ENCODE measurements at regions of chr3 and their contacts with region 1.

Region 1: DNA sequence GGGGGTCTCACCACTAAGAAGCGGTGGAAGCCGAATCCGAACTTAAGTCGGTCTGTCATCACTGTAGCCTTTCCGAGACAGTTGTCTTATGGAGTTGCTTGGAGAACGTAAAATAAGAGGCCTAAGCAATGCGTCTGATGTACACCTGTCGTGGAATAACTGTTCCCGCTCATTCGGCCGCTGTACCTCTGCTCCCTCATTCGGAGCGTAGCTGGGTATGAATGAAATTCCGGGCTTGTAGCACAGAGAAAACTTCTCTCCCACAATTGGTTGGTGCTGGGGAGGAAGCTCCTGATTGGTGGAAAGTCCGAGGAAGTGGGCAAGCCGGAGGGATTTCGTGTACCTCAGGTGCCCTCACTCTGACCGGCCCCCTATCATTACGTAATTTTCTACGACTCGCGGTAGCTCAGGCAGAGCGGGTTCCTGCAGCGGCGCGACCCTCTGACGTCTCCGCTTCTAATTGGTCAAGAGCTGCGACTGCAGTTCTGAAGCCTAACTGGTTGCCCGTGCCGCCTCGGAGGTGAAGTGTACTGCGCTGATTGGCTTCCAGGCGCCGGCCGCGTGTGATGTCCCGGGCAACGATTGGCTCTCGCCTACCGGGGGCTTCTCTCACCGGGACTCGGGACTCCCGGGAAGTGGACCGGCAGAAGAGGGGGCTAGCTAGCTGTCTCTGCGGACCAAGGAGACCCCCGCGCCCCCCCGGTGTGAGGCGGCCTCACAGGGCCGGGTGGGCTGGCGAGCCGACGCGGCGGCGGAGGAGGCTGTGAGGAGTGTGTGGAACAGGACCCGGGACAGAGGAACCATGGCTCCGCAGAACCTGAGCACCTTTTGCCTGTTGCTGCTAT is at the start of gene DNAJB11:
- DNase-seq: peak; percentile 98
- H3K4me3 Mint-ChIP-seq: peak within 1 kb of the TSS; percentile 91
- H3K27ac Mint-ChIP-seq: peak within 1 kb of the TSS; percentile 99
- H3K4me1 Mint-ChIP-seq: peaks cover 59% of the 10 kb centered on the region
- H3K27me3 Mint-ChIP-seq: no peaks in the 10 kb centered on the region
- total RNA-seq, gene DNAJB11: 71.0 and 75.8 TPM in 2 replicates

Region 2: GRCh38 chr3:185937689-185938463 is 632.4 kb before region 1 on chr3 and contains the start of gene TRA2B:
- intact Hi-C with region 1: loop called (anchors 1 kb)
- DNase-seq: peak; percentile 98
- H3K4me3 Mint-ChIP-seq: peak within 1 kb of the TSS; percentile 97
- H3K27ac Mint-ChIP-seq: peak within 1 kb of the TSS; percentile 99
- H3K4me1 Mint-ChIP-seq: peaks cover 40% of the 10 kb centered on the region
- H3K27me3 Mint-ChIP-seq: peaks cover 8% of the 10 kb centered on the region
- total RNA-seq, gene TRA2B: 279 and 312 TPM in 2 replicates

Region 3: GRCh38 chr3:186259612-186260383 is 310.5 kb before region 1 on chr3:
- intact Hi-C with region 1: loop called (anchors 1 kb)
- DNase-seq: peak; percentile 37
- H3K4me3 Mint-ChIP-seq: no peak overlapping the region
- H3K27ac Mint-ChIP-seq: peak overlapping the region; percentile 25
- H3K4me1 Mint-ChIP-seq: peaks cover 21% of the 10 kb centered on the region
- H3K27me3 Mint-ChIP-seq: peaks cover 15% of the 10 kb centered on the region

Region 4: GRCh38 chr3:186617038-186617946 is 47.0 kb after region 1 on chr3:
- intact Hi-C with region 1: loop called (anchors 1 kb)
- DNase-seq: peak; percentile 79
- H3K4me3 Mint-ChIP-seq: peak overlapping the region; percentile 68
- H3K27ac Mint-ChIP-seq: peak overlapping the region; percentile 6
- H3K4me1 Mint-ChIP-seq: peaks cover 28% of the 10 kb centered on the region
- H3K27me3 Mint-ChIP-seq: peaks cover 48% of the 10 kb centered on the region

Region 5: GRCh38 chr3:186806089-186807055 is 236.1 kb after region 1 on chr3 and contains the start of gene RFC4:
- intact Hi-C with region 1: loop called (anchors 1 kb)
- DNase-seq: peak; percentile 80
- H3K4me3 Mint-ChIP-seq: peak within 1 kb of the TSS; percentile 93
- H3K27ac Mint-ChIP-seq: peak within 1 kb of the TSS; percentile 85
- H3K4me1 Mint-ChIP-seq: peaks cover 31% of the 10 kb centered on the region
- H3K27me3 Mint-ChIP-seq: no peaks in the 10 kb centered on the region
- total RNA-seq, gene RFC4: 111 and 122 TPM in 2 replicates

Region 6: GRCh38 chr3:187139126-187139894 is 569.0 kb after region 1 on chr3 and contains the start of gene RPL39L:
- intact Hi-C with region 1: loop called (anchors 5 kb)
- DNase-seq: peak; percentile 91
- H3K4me3 Mint-ChIP-seq: peak within 1 kb of the TSS; percentile 92
- H3K27ac Mint-ChIP-seq: peak within 1 kb of the TSS; percentile 96
- H3K4me1 Mint-ChIP-seq: peaks cover 34% of the 10 kb centered on the region
- H3K27me3 Mint-ChIP-seq: peaks cover 3% of the 10 kb centered on the region
- total RNA-seq, gene RPL39L: 7.5 and 8.3 TPM in 2 replicates

Measured in activated T-helper 1 cell treated with anti-CD3 and anti-CD28 coated beads, Interleukin-12 subunit alpha, Interleukin-12 subunit beta, Interleukin-2, Interleukin-4 antibody, amounts not matched to agents 30 ng/mL and 10 ng/mL and 1 ng/mL, durations not matched to agents 14 hours and 24 hours and 36 hours (primary cell).